ENCODE measurements at regions of chr10 and their contacts with region 1.

Region 1: GRCh38 chr10:33143160-33143728 is 185.2 kb upstream of the ITGB1 start:
- DNase-seq: no peak
- H3K4me3 ChIP-seq: no peak overlapping the region
- H3K27ac ChIP-seq: no peak overlapping the region
- H3K4me1 ChIP-seq: no peaks in the 10 kb centered on the region
- H3K27me3 ChIP-seq: no peaks in the 10 kb centered on the region
- CTCF ChIP-seq: no peak
- EP300 ChIP-seq: no peak
- POLR2A ChIP-seq: no peak
- RAD21 ChIP-seq: no peak

Region 2: DNA sequence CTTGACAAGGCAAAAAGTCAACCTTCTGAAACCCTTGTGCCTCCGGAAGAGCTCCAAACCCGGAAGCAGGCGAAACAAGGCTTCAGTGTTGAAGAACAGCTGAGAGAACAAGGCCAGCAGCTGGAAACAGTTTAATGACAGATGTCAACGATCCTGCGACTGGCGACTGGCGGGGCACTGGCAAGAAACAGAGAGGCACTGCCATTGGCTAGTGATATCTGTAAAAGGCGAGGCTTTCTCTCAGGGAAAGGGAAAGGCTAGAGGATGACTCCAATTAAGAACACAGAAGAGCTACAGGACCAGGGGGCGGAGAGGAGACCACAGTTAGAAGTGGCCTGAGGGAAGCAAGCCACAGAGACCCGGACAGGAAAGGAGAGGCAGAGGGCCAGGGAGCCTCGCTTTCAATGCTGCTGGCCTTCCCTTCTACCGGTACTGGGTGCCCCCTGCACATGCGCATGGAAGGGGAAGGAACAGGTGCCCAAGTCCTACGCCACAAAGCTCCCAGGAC is 204.6 kb before region 1 on chr10:
- CTCF ChIA-PET with region 1: no interaction called
- POLR2A ChIA-PET with region 1: no interaction called
- DNase-seq: no peak
- H3K4me3 ChIP-seq: no peak overlapping the region
- H3K27ac ChIP-seq: no peak overlapping the region
- H3K4me1 ChIP-seq: peaks cover 0 to 18% (median 12%) of the 10 kb centered on the region in 4 experiments; a peak in 5 of 7 replicates
- H3K27me3 ChIP-seq: no peaks in the 10 kb centered on the region
- CTCF ChIP-seq: no peak
- EP300 ChIP-seq: no peak
- POLR2A ChIP-seq: no peak; a peak in 1 of 3 replicates
- RAD21 ChIP-seq: no peak

Region 3: GRCh38 chr10:33155720-33156638 is 12.7 kb after region 1 on chr10:
- CTCF ChIA-PET with region 1: interaction called, 12 read pairs
- POLR2A ChIA-PET with region 1: no interaction called
- DNase-seq: no peak
- H3K4me3 ChIP-seq: no peak overlapping the region
- H3K27ac ChIP-seq: no peak overlapping the region
- H3K4me1 ChIP-seq: no peaks in the 10 kb centered on the region
- H3K27me3 ChIP-seq: no peaks in the 10 kb centered on the region
- CTCF ChIP-seq: peak; percentile 52 to 75 (median 68)
- EP300 ChIP-seq: no peak
- POLR2A ChIP-seq: no peak
- RAD21 ChIP-seq: peak; percentile 76 to 78